Caco-2 (cell line): ENCODE measurements at regions of chrX and their contacts with region 1.

Region 1: GRCh38 chrX:109830704-109831206 is 97.7 kb upstream of the ACSL4 start:
- DNase-seq: peak; percentile 39 to 59
- H3K4me3 ChIP-seq: no peak overlapping the region
- H3K4me3 Mint-ChIP-seq: no peak overlapping the region
- H3K27ac Mint-ChIP-seq: peak overlapping the region; percentile 12
- H3K4me1 ChIP-seq: peaks cover 18% of the 10 kb centered on the region
- H3K4me1 Mint-ChIP-seq: peaks cover 15% of the 10 kb centered on the region
- H3K27me3 ChIP-seq: no peaks in the 10 kb centered on the region
- H3K27me3 Mint-ChIP-seq: no peaks in the 10 kb centered on the region
- CTCF ChIP-seq: no peak

Region 2: GRCh38 chrX:109732780-109733657 is 97.7 kb before region 1 on chrX and contains the start of gene ACSL4:
- CTCF ChIA-PET with region 1: interaction called, 3 read pairs
- POLR2A ChIA-PET with region 1: no interaction called
- intact Hi-C with region 1: loop called (anchors 5 kb)
- DNase-seq: peak; percentile 78 to 86
- H3K4me3 ChIP-seq: peak within 1 kb of the TSS; percentile 76
- H3K4me3 Mint-ChIP-seq: peak within 1 kb of the TSS; percentile 98
- H3K27ac Mint-ChIP-seq: peak within 1 kb of the TSS; percentile 96
- H3K4me1 ChIP-seq: no peaks in the 10 kb centered on the region; the same call in 1 of the 2 replicates
- H3K4me1 Mint-ChIP-seq: peaks cover 6% of the 10 kb centered on the region
- H3K27me3 ChIP-seq: no peaks in the 10 kb centered on the region
- H3K27me3 Mint-ChIP-seq: no peaks in the 10 kb centered on the region
- CTCF ChIP-seq: no peak
- total RNA-seq, gene ACSL4: 36.3 and 38.3 TPM in 2 replicates

Region 3: DNA sequence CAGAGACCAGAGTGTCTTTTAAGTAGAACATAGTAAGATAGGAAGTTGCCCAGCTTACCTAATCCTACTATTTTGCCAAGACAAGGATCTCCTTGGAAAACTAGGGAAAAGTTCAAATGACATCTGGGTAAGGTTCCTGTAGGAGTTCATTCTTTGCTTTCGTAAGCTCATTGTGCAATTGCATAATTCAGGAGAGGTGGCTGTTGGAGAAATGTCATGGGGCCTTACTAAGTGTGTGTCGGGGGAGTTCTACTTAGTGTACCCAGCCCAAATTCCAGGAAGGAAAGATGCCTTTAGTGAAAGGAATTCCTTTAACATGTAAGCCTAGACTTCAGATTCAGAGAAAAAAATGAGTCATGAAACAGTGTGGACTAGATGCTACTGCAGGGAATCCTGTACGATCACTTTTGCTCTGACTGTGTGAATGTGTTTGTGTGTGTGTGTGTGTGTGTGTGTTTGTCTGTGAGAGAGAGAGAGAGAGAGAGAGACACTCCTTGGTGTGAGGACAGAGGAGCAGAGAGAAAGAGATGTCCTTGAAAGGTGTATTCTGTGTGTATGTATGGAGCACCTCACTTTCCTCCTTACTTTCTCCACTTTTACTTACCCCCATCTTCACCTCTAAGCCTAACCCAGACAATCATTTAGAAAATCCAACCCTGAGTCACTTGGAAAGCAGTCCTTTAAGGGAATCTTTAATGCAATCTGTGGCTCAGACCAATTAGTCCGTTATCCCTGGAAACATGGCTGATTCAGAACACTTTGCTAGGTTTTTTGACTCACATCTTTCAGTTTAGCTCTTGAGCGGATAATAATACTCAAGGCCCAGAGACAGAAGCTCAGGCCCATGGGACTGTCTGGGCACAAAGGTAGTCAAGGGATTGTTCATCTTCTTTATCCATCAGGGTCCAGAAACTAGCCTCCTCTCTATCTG is 16.8 kb after region 1 on chrX:
- CTCF ChIA-PET with region 1: no interaction called
- POLR2A ChIA-PET with region 1: no interaction called
- intact Hi-C with region 1: loop called (anchors 1 kb)
- DNase-seq: peak; percentile 39 to 52
- H3K4me3 ChIP-seq: no peak overlapping the region
- H3K4me3 Mint-ChIP-seq: no peak overlapping the region
- H3K27ac Mint-ChIP-seq: peak overlapping the region; percentile 74
- H3K4me1 ChIP-seq: peaks cover 13% of the 10 kb centered on the region; the same call in 1 of the 2 replicates
- H3K4me1 Mint-ChIP-seq: peaks cover 9% of the 10 kb centered on the region
- H3K27me3 ChIP-seq: no peaks in the 10 kb centered on the region
- H3K27me3 Mint-ChIP-seq: no peaks in the 10 kb centered on the region
- CTCF ChIP-seq: no peak